ENCODE measurements at regions of chr1 and their contacts with region 1.

Region 1: GRCh38 chr1:85554630-85555327 is 25.8 kb upstream of the CCN1 start:
- DNase-seq: peak; percentile 65
- H3K4me3 Mint-ChIP-seq: no peak overlapping the region
- H3K27ac Mint-ChIP-seq: peak overlapping the region; percentile 52
- H3K4me1 Mint-ChIP-seq: peaks cover 25% of the 10 kb centered on the region
- H3K27me3 Mint-ChIP-seq: no peaks in the 10 kb centered on the region
- CTCF ChIP-seq: no peak

Region 2: GRCh38 chr1:85224734-85225623 is 329.8 kb before region 1 on chr1:
- CTCF ChIA-PET with region 1: no interaction called
- POLR2A ChIA-PET with region 1: no interaction called
- intact Hi-C with region 1: no loop called
- DNase-seq: no peak
- H3K4me3 Mint-ChIP-seq: no peak overlapping the region
- H3K27ac Mint-ChIP-seq: no peak overlapping the region
- H3K4me1 Mint-ChIP-seq: no peaks in the 10 kb centered on the region
- H3K27me3 Mint-ChIP-seq: no peaks in the 10 kb centered on the region
- CTCF ChIP-seq: no peak

Region 3: DNA sequence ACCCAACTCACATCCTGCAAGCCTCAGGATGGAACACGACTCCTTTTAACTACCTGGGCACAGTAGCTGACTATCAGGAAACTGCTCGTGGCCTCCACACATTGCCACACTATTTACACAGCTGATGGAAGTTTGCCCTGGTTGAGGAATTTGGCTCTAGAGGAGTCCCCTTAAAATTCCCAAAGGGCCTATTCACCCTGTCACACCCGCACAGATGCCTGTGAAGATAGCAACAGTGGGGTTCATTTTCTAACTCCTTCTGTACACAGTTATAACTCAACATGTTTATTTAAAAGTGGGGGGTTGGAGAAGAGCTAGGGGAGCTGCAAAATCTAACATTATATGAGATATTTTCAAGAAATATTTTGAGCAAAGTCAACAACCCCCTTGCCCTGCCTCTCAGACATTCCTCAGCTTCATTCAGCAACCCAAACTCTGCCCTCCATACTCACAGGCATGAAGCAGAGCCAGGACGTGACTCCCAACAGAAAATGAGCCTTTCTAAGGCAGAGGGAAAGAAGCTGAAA is 10.0 kb before region 1 on chr1:
- CTCF ChIA-PET with region 1: no interaction called
- POLR2A ChIA-PET with region 1: interaction called, 11 read pairs
- intact Hi-C with region 1: no loop called
- DNase-seq: peak; percentile 65
- H3K4me3 Mint-ChIP-seq: no peak overlapping the region
- H3K27ac Mint-ChIP-seq: peak overlapping the region; percentile 13
- H3K4me1 Mint-ChIP-seq: peaks cover 16% of the 10 kb centered on the region
- H3K27me3 Mint-ChIP-seq: no peaks in the 10 kb centered on the region
- CTCF ChIP-seq: no peak

Region 4: GRCh38 chr1:85746777-85747176 is 192.0 kb after region 1 on chr1:
- CTCF ChIA-PET with region 1: no interaction called
- POLR2A ChIA-PET with region 1: no interaction called
- intact Hi-C with region 1: no loop called
- DNase-seq: no peak
- H3K4me3 Mint-ChIP-seq: no peak overlapping the region
- H3K27ac Mint-ChIP-seq: no peak overlapping the region
- H3K4me1 Mint-ChIP-seq: no peaks in the 10 kb centered on the region
- H3K27me3 Mint-ChIP-seq: no peaks in the 10 kb centered on the region
- CTCF ChIP-seq: no peak

Measured in MCF 10A (cell line).